ENCODE measurements at regions of chr6 and their contacts with region 1.

Region 1: DNA sequence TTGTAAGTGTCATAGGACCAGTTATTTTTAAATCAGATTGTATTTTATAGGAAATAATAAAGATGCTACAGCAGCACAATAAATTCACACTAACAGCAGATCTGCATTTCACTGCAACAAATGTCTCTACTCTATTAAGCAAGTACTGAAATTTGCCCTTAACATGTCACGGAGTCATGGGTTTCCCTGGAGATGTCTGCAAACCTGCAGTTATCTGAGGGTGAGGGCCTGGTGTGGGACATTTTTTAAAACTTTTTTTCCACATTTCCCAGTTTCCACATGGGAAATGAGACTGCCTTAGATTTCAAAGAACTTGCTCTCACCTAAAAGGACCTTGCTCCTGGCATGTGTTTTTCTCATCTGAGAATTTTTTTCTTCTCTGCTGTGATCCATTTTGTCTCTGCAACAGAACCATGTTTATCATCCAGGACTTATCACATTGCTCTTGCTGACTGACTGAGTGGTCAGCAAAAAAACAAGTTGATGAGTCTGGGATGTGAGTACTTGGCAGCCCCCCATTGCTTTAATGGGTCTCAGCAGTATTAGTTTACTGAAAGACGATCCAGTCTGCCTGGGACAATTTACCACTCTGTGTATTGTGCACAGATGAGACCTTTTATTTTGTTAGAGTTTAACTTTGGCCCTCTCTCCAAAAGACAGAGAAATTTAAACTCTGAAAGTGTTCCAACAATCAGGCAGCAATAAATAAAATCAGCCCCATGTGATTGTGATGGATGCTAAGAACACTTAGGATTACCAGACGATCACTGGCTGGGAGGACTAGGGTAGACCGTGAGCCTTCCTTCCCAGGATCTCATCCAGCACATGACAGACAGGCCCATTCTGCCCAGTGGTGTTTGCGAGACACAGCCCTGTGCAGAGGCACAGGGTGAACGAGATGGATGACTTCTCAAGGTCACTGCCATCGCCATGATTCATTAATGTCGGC is 268.8 kb downstream of the BTBD9 start:
- DNase-seq: no peak
- ATAC-seq: no peak
- H3K4me3 ChIP-seq: no peak overlapping the region
- H3K27ac ChIP-seq: no peak overlapping the region
- H3K4me1 ChIP-seq: no peaks in the 10 kb centered on the region
- H3K27me3 ChIP-seq: no peaks in the 10 kb centered on the region
- CTCF ChIP-seq: no peak

Region 2: GRCh38 chr6:37882724-37883413 is 488.1 kb before region 1 on chr6:
- CTCF ChIA-PET with region 1: no interaction called
- POLR2A ChIA-PET with region 1: no interaction called
- in situ Hi-C with region 1: no loop called
- intact Hi-C with region 1: no loop called
- DNase-seq: no peak
- ATAC-seq: peak; percentile 54
- H3K4me3 ChIP-seq: no peak overlapping the region
- H3K27ac ChIP-seq: no peak overlapping the region
- H3K4me1 ChIP-seq: peaks cover 10% of the 10 kb centered on the region
- H3K27me3 ChIP-seq: no peaks in the 10 kb centered on the region
- CTCF ChIP-seq: no peak

Region 3: DNA sequence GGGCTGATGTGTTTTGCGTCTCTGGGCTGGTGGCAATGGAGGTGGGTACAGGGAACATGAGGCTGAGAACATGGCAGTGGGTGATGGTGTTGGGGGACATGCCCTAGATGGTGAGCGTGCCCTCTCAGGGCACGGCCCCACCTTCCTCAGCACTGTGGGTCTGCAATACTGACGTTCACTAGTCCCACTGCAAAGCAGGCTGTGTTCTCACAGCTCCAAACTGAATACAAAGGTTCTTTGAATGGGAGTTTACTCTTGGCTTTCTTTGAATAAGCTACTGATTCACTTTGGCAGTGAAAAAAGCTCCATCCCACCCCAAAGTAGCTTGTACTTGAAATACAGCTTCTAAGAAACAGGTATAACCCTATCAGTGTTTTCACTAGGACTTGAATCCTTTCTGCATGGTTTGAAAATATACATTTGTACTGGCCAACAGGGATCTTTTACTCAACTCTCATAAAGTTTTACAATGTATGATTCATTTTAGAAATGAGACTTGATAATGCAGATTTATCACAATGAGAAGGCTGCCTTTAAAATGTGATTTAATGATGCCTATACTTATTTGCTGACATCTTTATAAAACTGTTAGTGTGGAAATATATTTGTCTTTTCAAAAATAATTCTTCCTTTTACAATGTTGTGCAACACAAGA is 150.7 kb before region 1 on chr6:
- CTCF ChIA-PET with region 1: no interaction called
- POLR2A ChIA-PET with region 1: interaction called, 18 read pairs
- in situ Hi-C with region 1: no loop called
- intact Hi-C with region 1: no loop called
- DNase-seq: no peak
- ATAC-seq: no peak
- H3K4me3 ChIP-seq: no peak overlapping the region
- H3K27ac ChIP-seq: no peak overlapping the region
- H3K4me1 ChIP-seq: no peaks in the 10 kb centered on the region
- H3K27me3 ChIP-seq: no peaks in the 10 kb centered on the region
- CTCF ChIP-seq: no peak

Region 4: GRCh38 chr6:38320843-38321242 is 50.1 kb before region 1 on chr6:
- CTCF ChIA-PET with region 1: no interaction called
- POLR2A ChIA-PET with region 1: no interaction called
- in situ Hi-C with region 1: no loop called
- intact Hi-C with region 1: no loop called
- DNase-seq: no peak
- ATAC-seq: no peak
- H3K4me3 ChIP-seq: no peak overlapping the region
- H3K27ac ChIP-seq: no peak overlapping the region
- H3K4me1 ChIP-seq: no peaks in the 10 kb centered on the region
- H3K27me3 ChIP-seq: no peaks in the 10 kb centered on the region
- CTCF ChIP-seq: no peak

Region 5: GRCh38 chr6:38404355-38404754 is 33.4 kb after region 1 on chr6:
- CTCF ChIA-PET with region 1: interaction called, 13 read pairs
- POLR2A ChIA-PET with region 1: no interaction called
- in situ Hi-C with region 1: no loop called
- intact Hi-C with region 1: no loop called
- DNase-seq: no peak
- ATAC-seq: no peak
- H3K4me3 ChIP-seq: no peak overlapping the region
- H3K27ac ChIP-seq: no peak overlapping the region
- H3K4me1 ChIP-seq: no peaks in the 10 kb centered on the region; the same call in 1 of the 2 replicates
- H3K27me3 ChIP-seq: no peaks in the 10 kb centered on the region
- CTCF ChIP-seq: no peak